Panc1 (cell line): ENCODE measurements at regions of chr10 and their contacts with region 1.

Region 1: GRCh38 chr10:72697716-72698115 is 5.8 kb downstream of the MCU start:
- DNase-seq: no peak
- ATAC-seq: no peak
- H3K4me3 ChIP-seq: no peak overlapping the region
- H3K27ac ChIP-seq: no peak overlapping the region
- H3K4me1 ChIP-seq: peaks cover 13% of the 10 kb centered on the region
- H3K27me3 ChIP-seq: no peaks in the 10 kb centered on the region
- CTCF ChIP-seq: no peak

Region 2: DNA sequence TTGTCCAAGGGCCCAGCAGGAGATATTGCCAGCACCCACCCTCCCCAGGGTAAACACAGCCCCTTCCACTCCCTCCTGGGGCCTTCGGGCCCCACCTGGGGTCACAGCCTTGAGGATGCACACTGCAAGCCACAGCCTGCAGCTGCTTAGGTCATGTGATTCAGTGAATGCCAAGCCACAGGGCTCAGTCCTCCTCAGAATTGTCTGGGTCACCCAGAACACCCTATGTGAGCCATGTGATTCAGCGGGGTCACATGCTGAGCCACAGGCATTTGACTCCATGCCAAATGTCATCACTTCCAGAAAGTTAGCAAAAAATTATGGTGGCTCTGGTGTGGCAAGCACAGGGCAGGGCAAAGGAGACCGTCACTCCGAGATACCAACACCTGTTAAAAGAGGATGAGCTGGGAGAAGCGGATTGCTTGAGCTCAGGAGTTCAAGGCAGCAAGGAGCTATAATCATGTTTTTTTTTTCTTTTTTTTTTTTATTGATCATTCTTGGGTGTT is 829.5 kb before region 1 on chr10:
- CTCF ChIA-PET with region 1: interaction called, 13 read pairs
- POLR2A ChIA-PET with region 1: no interaction called
- in situ Hi-C with region 1: no loop called
- intact Hi-C with region 1: no loop called
- DNase-seq: peak; percentile 71
- ATAC-seq: peak; percentile 65
- H3K4me3 ChIP-seq: 0 out of 4 replicates have a peak overlapping the region, but pooled peaks of 1 of the 2 experiments have one; percentile 2
- H3K27ac ChIP-seq: peak overlapping the region; percentile 93
- H3K4me1 ChIP-seq: peaks cover 48% of the 10 kb centered on the region
- H3K27me3 ChIP-seq: no peaks in the 10 kb centered on the region
- CTCF ChIP-seq: no peak

Region 3: GRCh38 chr10:72386916-72387586 is 310.7 kb before region 1 on chr10:
- CTCF ChIA-PET with region 1: no interaction called
- POLR2A ChIA-PET with region 1: no interaction called
- in situ Hi-C with region 1: no loop called
- intact Hi-C with region 1: no loop called
- DNase-seq: no peak
- ATAC-seq: no peak
- H3K4me3 ChIP-seq: no peak overlapping the region
- H3K27ac ChIP-seq: no peak overlapping the region; the same call in 1 of the 2 replicates
- H3K4me1 ChIP-seq: no peaks in the 10 kb centered on the region
- H3K27me3 ChIP-seq: no peaks in the 10 kb centered on the region
- CTCF ChIP-seq: no peak

Region 4: DNA sequence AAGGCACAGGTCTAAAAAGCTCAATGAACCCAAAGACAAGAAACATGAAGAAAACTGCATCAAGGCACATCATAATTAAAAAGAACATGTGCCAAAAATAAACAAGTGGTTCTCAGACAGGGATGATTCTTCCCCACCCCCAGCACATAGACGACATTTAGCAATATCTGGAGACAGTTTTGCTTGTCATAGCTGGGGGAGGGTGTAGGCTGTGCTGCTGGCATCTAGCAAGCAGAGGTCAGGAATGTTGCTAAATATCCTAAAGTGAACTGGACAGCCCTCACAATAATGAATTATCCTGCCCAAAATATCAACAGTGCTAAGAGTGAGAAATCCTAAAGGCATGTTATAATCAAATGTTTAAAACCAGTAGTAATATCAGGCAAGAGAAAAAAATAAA is 194.5 kb before region 1 on chr10:
- CTCF ChIA-PET with region 1: no interaction called
- POLR2A ChIA-PET with region 1: no interaction called
- in situ Hi-C with region 1: no loop called
- intact Hi-C with region 1: no loop called
- DNase-seq: no peak
- ATAC-seq: no peak
- H3K4me3 ChIP-seq: no peak overlapping the region
- H3K27ac ChIP-seq: no peak overlapping the region
- H3K4me1 ChIP-seq: no peaks in the 10 kb centered on the region
- H3K27me3 ChIP-seq: no peaks in the 10 kb centered on the region
- CTCF ChIP-seq: no peak